ENCODE measurements at regions of chr15 and their contacts with region 1.

Region 1: DNA sequence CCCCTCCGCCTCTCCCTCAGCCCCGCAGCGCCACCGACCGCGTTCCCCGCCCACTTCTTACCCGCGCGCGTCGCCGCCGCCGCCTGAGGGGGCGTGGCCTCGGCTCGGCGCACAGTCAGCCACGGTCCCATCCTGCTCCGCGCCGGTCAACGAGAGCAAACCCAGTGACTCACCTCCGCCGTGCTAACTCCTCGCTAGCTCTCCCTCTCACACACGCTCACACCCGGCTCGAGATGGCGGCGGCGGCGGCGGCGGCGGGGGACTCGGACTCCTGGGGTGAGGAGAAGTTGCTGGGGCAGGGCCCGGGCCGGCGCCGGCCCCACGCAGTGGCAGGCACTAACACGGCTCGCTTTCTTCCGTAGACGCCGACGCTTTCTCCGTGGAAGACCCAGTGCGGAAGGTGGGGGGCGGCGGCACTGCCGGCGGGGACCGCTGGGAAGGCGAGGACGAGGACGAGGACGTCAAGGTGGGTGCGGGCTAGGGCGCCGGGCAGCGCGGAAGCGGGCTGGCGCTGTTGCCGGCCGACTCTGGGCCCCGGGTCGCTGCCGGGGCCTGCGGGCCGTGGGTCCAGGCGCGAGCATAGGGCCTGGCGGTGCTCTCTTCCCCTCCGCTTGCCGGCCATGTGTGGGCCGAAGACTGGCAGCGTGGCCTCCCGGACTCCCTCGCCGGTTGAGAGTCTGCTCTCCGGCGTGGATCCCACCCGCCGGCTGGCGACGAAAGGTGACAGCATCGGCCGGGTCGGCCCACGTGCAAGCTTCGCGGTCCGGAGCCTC is at the start of gene EIF3J:
- DNase-seq: peak; percentile 90 to 96 (median 95)
- H3K4me3 ChIP-seq: peak within 1 kb of the TSS; percentile 98
- H3K4me3 Mint-ChIP-seq: peak within 1 kb of the TSS; percentile 80 to 97 (median 92)
- H3K27ac ChIP-seq: peak within 1 kb of the TSS; percentile 89
- H3K27ac Mint-ChIP-seq: peak within 1 kb of the TSS; percentile 89 to 98 (median 95)
- H3K4me1 ChIP-seq: peaks cover 43% of the 10 kb centered on the region
- H3K4me1 Mint-ChIP-seq: peaks cover 46 to 70% (median 59%) of the 10 kb centered on the region in 3 donors
- H3K27me3 ChIP-seq: no peaks in the 10 kb centered on the region
- H3K27me3 Mint-ChIP-seq: no peaks in the 10 kb centered on the region
- total RNA-seq, gene EIF3J: 167 to 186 TPM

Region 2: GRCh38 chr15:44519537-44519936 is 17.6 kb before region 1 on chr15:
- CTCF ChIA-PET with region 1: no interaction called
- POLR2A ChIA-PET with region 1: interaction called, 11 read pairs
- DNase-seq: no peak
- H3K4me3 ChIP-seq: no peak overlapping the region
- H3K4me3 Mint-ChIP-seq: no peak overlapping the region
- H3K27ac ChIP-seq: no peak overlapping the region
- H3K27ac Mint-ChIP-seq: peak overlapping the region in 1 of 8 donors; percentile 61
- H3K4me1 ChIP-seq: no peaks in the 10 kb centered on the region
- H3K4me1 Mint-ChIP-seq: peaks cover 2 to 7% (median 7%) of the 10 kb centered on the region in 3 donors
- H3K27me3 ChIP-seq: no peaks in the 10 kb centered on the region
- H3K27me3 Mint-ChIP-seq: no peaks in the 10 kb centered on the region

Measured in CD8-positive, alpha-beta memory T cell (primary cell).